ENCODE measurements at regions of chr2 and their contacts with region 1.

Region 1: GRCh38 chr2:208407667-208408066 is 1.1 kb downstream of the PTH2R start:
- DNase-seq: peak; percentile 3
- ATAC-seq: peak; percentile 81
- H3K4me3 ChIP-seq: no peak overlapping the region
- H3K27ac ChIP-seq: no peak overlapping the region
- H3K4me1 ChIP-seq: no peaks in the 10 kb centered on the region
- H3K27me3 ChIP-seq: peaks cover 5 to 18% of the 10 kb centered on the region in 2 experiments; a peak in 2 of 5 replicates
- CTCF ChIP-seq: peak; percentile 57
- EP300 ChIP-seq: no peak
- POLR2A ChIP-seq: no peak
- RAD21 ChIP-seq: peak; percentile 41; the same call in 1 of the 2 replicates

Region 2: DNA sequence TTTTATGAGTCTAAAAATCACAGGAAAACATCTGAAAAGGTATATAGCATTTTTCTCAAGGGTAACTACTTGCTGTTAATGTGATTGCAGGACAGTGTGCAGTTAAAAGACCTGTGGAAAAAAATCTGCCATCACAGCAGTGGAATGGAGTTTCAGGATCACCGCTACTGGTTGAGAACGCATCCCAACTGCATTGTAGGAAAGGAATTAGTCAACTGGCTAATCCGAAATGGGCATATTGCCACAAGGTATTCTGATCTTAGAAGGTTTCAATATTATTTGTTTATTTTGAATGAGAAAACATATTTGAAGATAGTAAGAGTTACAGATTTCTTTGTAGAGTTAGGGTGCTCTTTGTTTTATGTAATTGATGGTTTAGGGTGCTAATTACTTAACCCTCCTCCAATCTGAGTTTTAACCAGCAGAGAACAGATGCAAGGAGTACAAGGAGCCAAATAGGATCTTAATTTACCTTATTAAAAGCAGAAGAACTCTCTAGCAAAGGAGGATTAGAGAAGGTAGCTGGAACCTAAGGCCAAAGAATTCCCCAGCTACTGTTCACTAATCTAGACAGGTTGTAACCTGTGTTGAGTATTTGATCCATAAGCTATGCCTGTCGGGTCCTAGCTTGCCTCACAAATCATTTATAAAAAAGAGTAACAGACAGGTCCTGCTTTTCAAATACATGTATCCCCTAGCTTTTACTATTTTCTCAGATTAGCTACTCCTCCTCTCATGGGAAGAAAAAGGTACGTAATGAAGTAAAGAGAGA is 106.6 kb before region 1 on chr2:
- CTCF ChIA-PET with region 1: no interaction called
- POLR2A ChIA-PET with region 1: no interaction called
- in situ Hi-C with region 1: no loop called
- intact Hi-C with region 1: no loop called
- DNase-seq: no peak
- ATAC-seq: no peak
- H3K4me3 ChIP-seq: no peak overlapping the region
- H3K27ac ChIP-seq: no peak overlapping the region
- H3K4me1 ChIP-seq: no peaks in the 10 kb centered on the region
- H3K27me3 ChIP-seq: no peaks in the 10 kb centered on the region
- CTCF ChIP-seq: no peak
- EP300 ChIP-seq: no peak
- POLR2A ChIP-seq: no peak
- RAD21 ChIP-seq: no peak

Region 3: DNA sequence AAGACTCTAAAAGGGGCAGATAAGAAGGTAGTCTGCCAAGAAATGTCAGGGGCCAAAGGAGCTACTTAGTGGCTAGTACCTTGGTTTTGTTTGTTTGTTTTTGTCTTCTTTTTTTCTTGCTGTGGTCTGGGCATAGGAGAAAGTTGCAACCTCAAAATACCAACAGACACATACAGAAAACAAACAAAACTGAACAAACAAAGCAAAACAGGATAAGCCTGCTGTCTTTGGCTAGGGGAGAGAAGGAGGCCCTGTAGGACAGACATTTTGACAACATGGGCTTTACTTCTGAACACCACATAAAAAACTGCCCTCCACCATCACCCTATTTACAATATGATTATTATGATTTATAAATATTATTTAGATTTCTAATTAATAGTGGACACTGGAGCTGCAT is 459.7 kb after region 1 on chr2:
- CTCF ChIA-PET with region 1: no interaction called
- POLR2A ChIA-PET with region 1: no interaction called
- in situ Hi-C with region 1: no loop called
- intact Hi-C with region 1: no loop called
- DNase-seq: no peak
- ATAC-seq: no peak
- H3K4me3 ChIP-seq: no peak overlapping the region
- H3K27ac ChIP-seq: no peak overlapping the region
- H3K4me1 ChIP-seq: no peaks in the 10 kb centered on the region
- H3K27me3 ChIP-seq: no peaks in the 10 kb centered on the region
- CTCF ChIP-seq: no peak
- EP300 ChIP-seq: no peak
- POLR2A ChIP-seq: no peak
- RAD21 ChIP-seq: no peak

Region 4: GRCh38 chr2:209322041-209322440 is 914.4 kb after region 1 on chr2:
- CTCF ChIA-PET with region 1: no interaction called
- POLR2A ChIA-PET with region 1: no interaction called
- in situ Hi-C with region 1: no loop called
- intact Hi-C with region 1: loop called (anchors 2 kb)
- DNase-seq: no peak
- ATAC-seq: no peak
- H3K4me3 ChIP-seq: no peak overlapping the region
- H3K27ac ChIP-seq: no peak overlapping the region
- H3K4me1 ChIP-seq: no peaks in the 10 kb centered on the region
- H3K27me3 ChIP-seq: no peaks in the 10 kb centered on the region
- CTCF ChIP-seq: no peak
- EP300 ChIP-seq: no peak
- POLR2A ChIP-seq: no peak
- RAD21 ChIP-seq: no peak

Region 5: GRCh38 chr2:209348433-209348832 is 940.8 kb after region 1 on chr2:
- CTCF ChIA-PET with region 1: no interaction called
- POLR2A ChIA-PET with region 1: no interaction called
- in situ Hi-C with region 1: loop called (anchors 10 kb)
- intact Hi-C with region 1: no loop called
- DNase-seq: no peak
- ATAC-seq: no peak
- H3K4me3 ChIP-seq: no peak overlapping the region
- H3K27ac ChIP-seq: no peak overlapping the region
- H3K4me1 ChIP-seq: no peaks in the 10 kb centered on the region
- H3K27me3 ChIP-seq: no peaks in the 10 kb centered on the region
- CTCF ChIP-seq: no peak
- EP300 ChIP-seq: no peak
- POLR2A ChIP-seq: no peak
- RAD21 ChIP-seq: no peak

Region 6: DNA sequence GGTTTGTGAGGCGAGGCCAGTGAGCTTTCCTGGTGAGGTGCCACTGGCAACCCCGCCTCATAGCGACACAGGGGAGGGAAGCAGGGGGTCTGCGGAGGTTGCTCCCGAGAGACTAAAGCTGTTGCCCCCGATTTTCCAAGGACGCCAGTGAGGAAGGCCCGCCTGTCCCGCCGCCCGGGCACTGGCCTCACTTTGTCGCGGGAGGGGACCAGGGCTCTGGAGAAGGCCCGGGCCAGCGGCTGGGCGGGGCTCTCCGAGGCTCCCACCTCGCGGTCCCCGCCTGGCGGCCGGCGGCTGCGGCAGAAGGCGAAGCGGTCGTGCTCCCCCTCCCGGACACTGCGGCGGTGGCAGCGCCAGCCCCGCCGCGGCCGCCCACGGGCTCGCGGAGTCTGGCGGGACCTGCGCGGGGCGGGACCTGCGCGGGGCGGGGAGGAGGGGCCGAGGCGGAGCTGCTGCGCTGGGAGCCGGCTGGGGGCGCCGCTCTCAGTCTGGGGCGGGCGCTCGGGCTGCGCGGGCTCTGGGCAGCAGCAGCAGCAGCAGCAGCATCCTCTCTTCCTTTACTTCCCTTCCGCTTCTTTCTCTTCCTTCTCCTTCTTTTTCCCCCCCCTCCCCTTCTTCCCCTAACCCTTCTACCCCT is 1016.0 kb after region 1 on chr2 and contains the start of gene MAP2:
- CTCF ChIA-PET with region 1: interaction called, 3 read pairs
- POLR2A ChIA-PET with region 1: no interaction called
- in situ Hi-C with region 1: loop called (anchors 10 kb)
- intact Hi-C with region 1: no loop called
- DNase-seq: peak; percentile 61
- ATAC-seq: peak; percentile 99
- H3K4me3 ChIP-seq: peak within 1 kb of the TSS; percentile 29 to 63 (median 41); a peak in 5 of 6 replicates
- H3K27ac ChIP-seq: no peak within 1 kb of the TSS
- H3K4me1 ChIP-seq: peaks cover 11% of the 10 kb centered on the region
- H3K27me3 ChIP-seq: peaks cover 0 to 5% of the 10 kb centered on the region in 2 experiments; a peak in 2 of 5 replicates
- CTCF ChIP-seq: peak; percentile 81
- EP300 ChIP-seq: peak in 1 of 2 experiments; percentile 22; a peak in 1 of 4 replicates
- POLR2A ChIP-seq: no peak
- RAD21 ChIP-seq: peak; percentile 94
- total RNA-seq, gene MAP2: not detected in 2 replicates

Region 7: GRCh38 chr2:209565896-209566582 is 1158.4 kb after region 1 on chr2:
- CTCF ChIA-PET with region 1: no interaction called
- POLR2A ChIA-PET with region 1: no interaction called
- in situ Hi-C with region 1: loop called (anchors 10 kb)
- intact Hi-C with region 1: no loop called
- DNase-seq: no peak
- ATAC-seq: no peak
- H3K4me3 ChIP-seq: no peak overlapping the region
- H3K27ac ChIP-seq: no peak overlapping the region
- H3K4me1 ChIP-seq: peaks cover 11% of the 10 kb centered on the region; the same call in 1 of the 2 replicates
- H3K27me3 ChIP-seq: no peaks in the 10 kb centered on the region; a peak in 1 of 5 replicates
- CTCF ChIP-seq: no peak
- EP300 ChIP-seq: no peak
- POLR2A ChIP-seq: no peak
- RAD21 ChIP-seq: no peak

Region 8: GRCh38 chr2:209960676-209961630 is 1553.3 kb after region 1 on chr2:
- CTCF ChIA-PET with region 1: no interaction called
- POLR2A ChIA-PET with region 1: no interaction called
- in situ Hi-C with region 1: loop called (anchors 25 kb)
- intact Hi-C with region 1: no loop called
- DNase-seq: peak; percentile 67
- ATAC-seq: peak; percentile 98
- H3K4me3 ChIP-seq: no peak overlapping the region
- H3K27ac ChIP-seq: no peak overlapping the region
- H3K4me1 ChIP-seq: no peaks in the 10 kb centered on the region
- H3K27me3 ChIP-seq: 0 out of 5 replicates have a peak, but pooled peaks cover 0 to 12% of the 10 kb centered on the region in 2 experiments
- CTCF ChIP-seq: peak; percentile 85
- EP300 ChIP-seq: no peak
- POLR2A ChIP-seq: no peak
- RAD21 ChIP-seq: peak; percentile 45; the same call in 1 of the 2 replicates

Measured in HepG2 (cell line).